Activated CD4-positive, alpha-beta T cell treated with anti-CD3 and anti-CD28 coated beads for 36 hours (primary cell): ENCODE measurements at regions of chr20 and their contacts with region 1.

Region 1: DNA sequence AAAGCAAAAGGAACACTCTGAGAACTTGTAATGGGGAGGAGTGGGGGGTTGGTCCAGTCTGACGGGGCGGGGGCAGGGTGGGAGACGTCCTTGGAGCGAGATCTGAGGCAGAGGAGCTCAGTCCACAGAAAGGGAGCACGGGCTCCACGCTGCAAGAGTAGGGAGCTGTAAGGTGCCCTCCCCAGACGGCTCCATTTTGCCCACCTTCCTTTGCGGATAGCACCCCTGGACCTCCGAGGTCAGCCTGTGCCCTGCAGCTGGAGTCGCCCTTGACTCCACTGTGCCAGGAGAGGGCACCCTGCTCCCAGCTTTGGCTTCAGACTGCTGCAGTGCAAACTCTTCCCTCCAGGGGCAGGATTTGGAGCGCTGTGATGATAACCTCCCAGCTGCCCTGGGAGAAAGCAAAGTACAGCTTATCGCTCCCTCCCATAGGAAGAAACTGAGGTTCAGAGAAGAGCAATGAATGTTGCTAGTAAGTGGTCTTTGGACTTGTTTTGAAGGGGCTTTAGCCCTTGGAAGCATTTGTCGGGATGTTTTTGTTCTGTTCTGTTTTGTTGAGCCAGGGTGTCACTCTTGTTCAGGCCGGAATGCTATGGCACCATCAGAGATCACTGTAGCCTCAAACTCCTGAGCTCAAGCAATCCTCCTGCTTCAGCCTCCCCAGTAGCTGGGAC is 9.5 kb upstream of the AHCY start:
- DNase-seq: peak; percentile 94
- ATAC-seq: peak; percentile 99
- H3K4me3 Mint-ChIP-seq: no peak overlapping the region
- H3K27ac Mint-ChIP-seq: no peak overlapping the region
- H3K4me1 Mint-ChIP-seq: peaks cover 7% of the 10 kb centered on the region
- H3K27me3 Mint-ChIP-seq: peaks cover 18% of the 10 kb centered on the region

Region 2: GRCh38 chr20:34363062-34363464 is 50.4 kb after region 1 on chr20 and contains the start of gene ITCH:
- CTCF ChIA-PET with region 1: interaction called, 28 read pairs
- POLR2A ChIA-PET with region 1: interaction called, 3 read pairs
- intact Hi-C with region 1: no loop called
- DNase-seq: peak; percentile 97
- ATAC-seq: peak; percentile 99
- H3K4me3 Mint-ChIP-seq: peak within 1 kb of the TSS; percentile 91
- H3K27ac Mint-ChIP-seq: peak within 1 kb of the TSS; percentile 98
- H3K4me1 Mint-ChIP-seq: peaks cover 38% of the 10 kb centered on the region
- H3K27me3 Mint-ChIP-seq: no peaks in the 10 kb centered on the region
- total RNA-seq, gene ITCH: 41.4 to 43.5 TPM

Region 3: GRCh38 chr20:34437330-34437986 is 124.8 kb after region 1 on chr20:
- CTCF ChIA-PET with region 1: interaction called, 19 read pairs
- POLR2A ChIA-PET with region 1: no interaction called
- intact Hi-C with region 1: no loop called
- DNase-seq: no peak
- ATAC-seq: no peak
- H3K4me3 Mint-ChIP-seq: no peak overlapping the region
- H3K27ac Mint-ChIP-seq: peak overlapping the region; percentile 47
- H3K4me1 Mint-ChIP-seq: peaks cover 10% of the 10 kb centered on the region
- H3K27me3 Mint-ChIP-seq: no peaks in the 10 kb centered on the region

Region 4: DNA sequence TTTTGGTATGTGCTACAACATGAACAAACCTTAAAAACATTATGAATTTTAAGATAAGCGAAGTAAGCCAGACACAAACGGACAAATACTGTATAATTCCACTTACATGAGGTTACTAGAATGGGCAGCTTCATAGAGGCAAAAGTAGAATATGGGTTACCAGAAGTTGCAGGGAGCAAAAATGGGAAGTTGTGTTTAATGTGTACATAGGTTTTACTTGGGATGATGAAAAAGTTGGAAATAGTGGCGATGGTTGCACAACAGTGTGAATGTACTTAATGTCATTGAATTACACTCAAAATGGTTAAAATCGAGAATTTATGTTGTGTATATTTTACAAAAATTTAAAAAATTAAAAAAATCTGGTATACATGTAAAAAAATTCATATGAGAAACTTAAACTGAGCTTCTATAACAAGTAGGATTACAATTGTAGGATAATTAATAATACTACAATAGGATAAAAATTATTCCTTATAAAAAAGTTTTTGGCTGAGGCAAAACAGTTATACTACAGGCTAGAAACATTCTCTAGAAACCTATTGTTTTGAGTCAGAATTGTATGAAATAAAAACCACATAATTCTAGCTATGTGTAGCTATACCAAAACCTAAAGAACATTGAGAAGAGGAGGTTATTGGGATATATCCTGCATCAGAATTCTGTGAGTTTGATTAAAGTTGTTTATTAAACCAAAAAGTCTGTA is 178.7 kb after region 1 on chr20:
- CTCF ChIA-PET with region 1: interaction called, 12 read pairs
- POLR2A ChIA-PET with region 1: no interaction called
- intact Hi-C with region 1: no loop called
- DNase-seq: no peak
- ATAC-seq: peak; percentile 39
- H3K4me3 Mint-ChIP-seq: no peak overlapping the region
- H3K27ac Mint-ChIP-seq: no peak overlapping the region
- H3K4me1 Mint-ChIP-seq: peaks cover 3% of the 10 kb centered on the region
- H3K27me3 Mint-ChIP-seq: no peaks in the 10 kb centered on the region

Region 5: GRCh38 chr20:34532406-34532719 is 219.7 kb after region 1 on chr20:
- CTCF ChIA-PET with region 1: interaction called, 14 read pairs
- POLR2A ChIA-PET with region 1: no interaction called
- intact Hi-C with region 1: loop called in 1 of 2 experiments (anchors 5 kb)
- DNase-seq: no peak
- ATAC-seq: no peak
- H3K4me3 Mint-ChIP-seq: no peak overlapping the region
- H3K27ac Mint-ChIP-seq: no peak overlapping the region
- H3K4me1 Mint-ChIP-seq: no peaks in the 10 kb centered on the region
- H3K27me3 Mint-ChIP-seq: no peaks in the 10 kb centered on the region

Region 6: DNA sequence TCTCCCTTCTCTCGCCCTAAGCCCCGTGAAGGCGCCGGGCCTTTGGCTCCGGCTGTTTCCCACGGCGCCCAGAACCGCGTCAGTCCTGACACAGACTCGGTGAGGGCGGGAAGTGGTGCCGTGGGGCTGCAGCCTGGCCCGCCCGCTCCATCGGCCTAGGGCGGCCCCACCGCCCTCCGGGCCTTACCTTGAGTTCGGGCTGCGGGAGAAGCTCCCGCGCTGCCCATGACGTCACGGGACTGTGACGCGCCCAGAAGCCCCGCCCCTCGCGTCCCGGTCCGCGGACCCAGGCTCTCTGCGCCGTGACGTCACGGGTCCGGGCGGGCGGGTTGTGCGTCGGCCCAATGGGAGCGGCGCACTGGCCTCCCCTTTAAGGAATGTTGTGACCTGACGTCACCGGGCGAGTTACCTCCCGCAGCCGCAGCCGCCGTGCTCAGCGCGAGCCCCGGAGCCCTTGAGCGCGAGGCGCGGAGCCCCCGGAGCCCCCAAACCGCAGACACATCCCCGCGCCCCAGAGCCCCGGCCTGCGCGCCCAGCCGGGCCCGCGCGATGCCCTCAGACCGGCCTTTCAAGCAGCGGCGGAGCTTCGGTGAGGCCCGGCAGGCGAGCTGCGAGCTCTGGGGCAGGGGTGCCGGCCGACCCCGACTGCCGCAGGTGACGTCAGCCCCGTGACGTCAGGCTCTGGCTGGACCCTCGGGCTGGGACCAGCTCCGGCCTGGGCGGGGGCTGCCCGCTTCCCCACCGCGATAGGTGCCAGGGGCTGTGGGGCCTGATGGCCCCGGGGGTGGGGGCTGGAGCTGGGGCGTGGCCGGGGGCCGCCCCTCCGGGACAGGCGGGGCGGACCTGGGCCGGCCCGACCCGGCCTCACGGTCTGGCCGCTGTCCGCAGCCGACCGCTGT is 245.9 kb after region 1 on chr20 and contains the start of gene MAP1LC3A:
- CTCF ChIA-PET with region 1: interaction called, 14 read pairs
- POLR2A ChIA-PET with region 1: no interaction called
- intact Hi-C with region 1: no loop called
- DNase-seq: peak; percentile 96
- ATAC-seq: peak; percentile 87
- H3K4me3 Mint-ChIP-seq: peak within 1 kb of the TSS; percentile 79
- H3K27ac Mint-ChIP-seq: peak within 1 kb of the TSS; percentile 88
- H3K4me1 Mint-ChIP-seq: peaks cover 14% of the 10 kb centered on the region
- H3K27me3 Mint-ChIP-seq: no peaks in the 10 kb centered on the region
- total RNA-seq, gene MAP1LC3A: 2.5 to 2.7 TPM